ENCODE measurements at regions of chr2 and their contacts with region 1.

Region 1: GRCh38 chr2:210250622-210251021 is 25.4 kb upstream of the ACADL start:
- DNase-seq: no peak
- ATAC-seq: no peak
- H3K4me3 ChIP-seq: no peak overlapping the region
- H3K27ac ChIP-seq: no peak overlapping the region
- H3K4me1 ChIP-seq: no peaks in the 10 kb centered on the region
- CTCF ChIP-seq: no peak
- EP300 ChIP-seq: no peak
- POLR2A ChIP-seq: no peak
- RAD21 ChIP-seq: no peak

Region 2: GRCh38 chr2:210399440-210400041 is 148.9 kb after region 1 on chr2:
- CTCF ChIA-PET with region 1: interaction called, 14 read pairs
- POLR2A ChIA-PET with region 1: interaction called, 4 read pairs
- DNase-seq: peak in 1 of 2 experiments; percentile 11
- ATAC-seq: 0 out of 6 replicates have a peak, but pooled peaks of 1 of the 2 experiments have one; percentile 30
- H3K4me3 ChIP-seq: no peak overlapping the region
- H3K27ac ChIP-seq: no peak overlapping the region
- H3K4me1 ChIP-seq: no peaks in the 10 kb centered on the region
- CTCF ChIP-seq: peak; percentile 49; the same call in 2 of the 3 replicates
- EP300 ChIP-seq: no peak
- POLR2A ChIP-seq: no peak
- RAD21 ChIP-seq: peak; percentile 46 to 47

Region 3: GRCh38 chr2:210503001-210503623 is 252.5 kb after region 1 on chr2:
- CTCF ChIA-PET with region 1: no interaction called
- POLR2A ChIA-PET with region 1: no interaction called
- DNase-seq: peak; percentile 38 to 64
- ATAC-seq: peak; percentile 90 to 94
- H3K4me3 ChIP-seq: peak overlapping the region; percentile 35
- H3K27ac ChIP-seq: peak overlapping the region in 1 of 2 experiments; percentile 59; a peak in 2 of 6 replicates
- H3K4me1 ChIP-seq: peaks cover 7% of the 10 kb centered on the region; the same call in 1 of the 3 replicates
- CTCF ChIP-seq: peak; percentile 87
- EP300 ChIP-seq: no peak
- POLR2A ChIP-seq: no peak
- RAD21 ChIP-seq: peak; percentile 62 to 68